Astrocyte of the cerebellum (primary cell): ENCODE measurements at regions of chr1 and their contacts with region 1.

Region 1: DNA sequence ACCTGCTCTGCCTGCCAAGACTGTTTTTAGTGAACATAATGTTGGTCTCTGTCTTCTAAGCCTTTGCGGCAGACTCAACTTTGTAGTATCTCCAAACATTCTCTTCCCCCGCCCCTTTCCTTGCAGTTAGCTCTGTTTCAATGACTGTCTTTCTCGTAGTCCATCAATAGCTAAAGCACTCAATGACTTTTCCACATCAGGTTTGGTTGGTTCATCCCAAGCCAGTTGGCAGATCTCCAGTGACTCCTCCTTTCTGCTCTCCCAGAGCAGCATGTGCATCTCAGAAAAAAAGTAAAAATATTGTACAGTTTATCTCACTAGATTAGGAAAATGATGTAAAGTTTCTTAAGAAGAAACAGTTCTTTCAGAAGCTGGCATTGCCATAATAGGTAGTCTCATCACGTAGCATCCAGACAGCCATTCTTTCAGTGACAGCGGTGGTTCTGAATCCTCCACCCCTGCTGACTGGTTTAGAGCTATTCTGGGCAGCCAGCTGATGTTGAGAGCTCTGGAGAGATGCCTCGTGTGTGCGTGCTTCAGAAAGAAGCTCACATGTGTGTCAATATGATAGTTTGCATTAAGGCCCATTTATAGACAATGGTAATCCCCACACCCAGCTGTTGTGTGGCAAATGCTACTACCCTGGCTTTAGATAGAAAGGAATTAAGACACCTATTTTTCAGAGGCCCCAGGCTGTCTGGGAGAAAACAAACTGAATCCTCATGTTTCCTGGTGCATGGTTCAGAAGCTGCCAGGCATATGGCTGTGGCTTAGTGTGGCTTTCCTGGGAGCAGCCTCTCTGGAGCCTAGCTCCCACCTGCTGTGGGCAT is 53.2 kb downstream of the CNN3 start:
- DNase-seq: no peak
- H3K4me3 ChIP-seq: no peak overlapping the region
- CTCF ChIP-seq: no peak

Region 2: GRCh38 chr1:94971491-94971924 is 97.8 kb after region 1 on chr1:
- in situ Hi-C with region 1: loop called (anchors 5 kb)
- DNase-seq: no peak
- H3K4me3 ChIP-seq: no peak overlapping the region
- CTCF ChIP-seq: no peak